ENCODE measurements at regions of chr14 and their contacts with region 1.

Region 1: DNA sequence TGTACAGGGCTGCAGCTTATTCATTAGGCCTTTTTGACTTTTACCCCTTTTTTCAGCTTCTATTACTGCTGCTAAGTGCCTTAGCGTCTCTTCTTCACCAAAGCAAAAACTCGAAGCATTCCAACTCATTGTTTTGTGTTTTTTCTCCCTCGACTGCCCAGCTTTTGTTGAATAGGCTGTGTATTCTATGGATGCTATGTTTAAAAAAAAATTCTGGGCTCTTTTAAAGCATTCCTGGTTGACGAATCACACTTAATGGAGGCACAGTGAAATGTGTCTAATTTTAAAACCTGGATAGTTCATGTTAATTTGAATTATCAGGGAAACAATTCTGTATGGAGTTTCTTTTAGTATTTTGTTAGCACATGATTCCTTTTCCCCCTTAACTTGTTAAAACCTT is 29.7 kb downstream of the KTN1 start:
- DNase-seq: no peak
- H3K4me3 ChIP-seq: no peak overlapping the region
- H3K4me3 Mint-ChIP-seq: no peak overlapping the region
- H3K27ac Mint-ChIP-seq: no peak overlapping the region
- H3K4me1 ChIP-seq: peaks cover 43% of the 10 kb centered on the region
- H3K4me1 Mint-ChIP-seq: peaks cover 25% of the 10 kb centered on the region
- H3K27me3 ChIP-seq: no peaks in the 10 kb centered on the region
- H3K27me3 Mint-ChIP-seq: no peaks in the 10 kb centered on the region
- CTCF ChIP-seq: no peak

Region 2: GRCh38 chr14:55546212-55546874 is 63.3 kb before region 1 on chr14:
- CTCF ChIA-PET with region 1: no interaction called
- POLR2A ChIA-PET with region 1: no interaction called
- intact Hi-C with region 1: loop called (anchors 1 kb)
- DNase-seq: no peak
- H3K4me3 ChIP-seq: no peak overlapping the region
- H3K4me3 Mint-ChIP-seq: no peak overlapping the region
- H3K27ac Mint-ChIP-seq: no peak overlapping the region
- H3K4me1 ChIP-seq: peaks cover 23% of the 10 kb centered on the region
- H3K4me1 Mint-ChIP-seq: peaks cover 31% of the 10 kb centered on the region
- H3K27me3 ChIP-seq: no peaks in the 10 kb centered on the region
- H3K27me3 Mint-ChIP-seq: no peaks in the 10 kb centered on the region
- CTCF ChIP-seq: no peak

Region 3: DNA sequence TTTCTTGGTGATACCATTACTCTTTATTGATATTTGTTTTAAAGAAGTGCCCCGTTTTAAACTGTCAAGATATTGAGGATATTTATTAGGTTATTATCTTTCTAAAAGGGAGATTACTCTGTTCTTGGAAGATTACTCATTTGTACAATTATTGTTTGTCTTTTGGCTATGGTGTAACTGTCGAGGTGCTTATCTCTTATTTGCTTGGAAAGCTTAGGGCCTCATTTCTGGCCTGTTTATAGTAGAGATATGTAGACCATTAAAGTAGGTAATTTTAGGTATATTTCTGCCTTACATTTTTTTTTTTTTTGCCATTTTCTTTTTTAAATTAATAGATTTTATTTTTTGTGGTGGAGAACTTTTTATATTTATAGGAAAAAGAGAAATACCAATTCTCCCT is 44.6 kb after region 1 on chr14:
- CTCF ChIA-PET with region 1: no interaction called
- POLR2A ChIA-PET with region 1: no interaction called
- intact Hi-C with region 1: loop called (anchors 2 kb)
- DNase-seq: peak in 1 of 2 experiments; percentile 11
- H3K4me3 ChIP-seq: no peak overlapping the region
- H3K4me3 Mint-ChIP-seq: no peak overlapping the region
- H3K27ac Mint-ChIP-seq: no peak overlapping the region
- H3K4me1 ChIP-seq: peaks cover 13% of the 10 kb centered on the region
- H3K4me1 Mint-ChIP-seq: no peaks in the 10 kb centered on the region
- H3K27me3 ChIP-seq: no peaks in the 10 kb centered on the region
- H3K27me3 Mint-ChIP-seq: no peaks in the 10 kb centered on the region
- CTCF ChIP-seq: no peak

Region 4: GRCh38 chr14:57268161-57269069 is 1658.7 kb after region 1 on chr14 and contains the starts of genes AP5M1 and EXOC5:
- CTCF ChIA-PET with region 1: no interaction called
- POLR2A ChIA-PET with region 1: no interaction called
- intact Hi-C with region 1: loop called (anchors 5 kb)
- DNase-seq: peak; percentile 91 to 93
- H3K4me3 ChIP-seq: peak within 1 kb of the TSS; percentile 79
- H3K4me3 Mint-ChIP-seq: peak within 1 kb of the TSS; percentile 99
- H3K27ac Mint-ChIP-seq: peak within 1 kb of the TSS; percentile 99
- H3K4me1 ChIP-seq: peaks cover 45% of the 10 kb centered on the region
- H3K4me1 Mint-ChIP-seq: peaks cover 35% of the 10 kb centered on the region
- H3K27me3 ChIP-seq: no peaks in the 10 kb centered on the region
- H3K27me3 Mint-ChIP-seq: no peaks in the 10 kb centered on the region
- CTCF ChIP-seq: peak in 1 of 2 experiments; percentile 5
- total RNA-seq, gene AP5M1: 39.4 and 47.8 TPM in 2 replicates
- total RNA-seq, gene EXOC5: 66.5 and 69.8 TPM in 2 replicates

Measured in Caco-2 (cell line).